ENCODE measurements at regions of chr4 and their contacts with region 1.

Region 1: GRCh38 chr4:122602277-122603142 is 18.4 kb downstream of the IL21 start:
- DNase-seq: no peak
- H3K4me3 Mint-ChIP-seq: no peak overlapping the region
- H3K27ac Mint-ChIP-seq: no peak overlapping the region
- H3K4me1 Mint-ChIP-seq: peaks cover 13% of the 10 kb centered on the region
- H3K27me3 Mint-ChIP-seq: peaks cover 7% of the 10 kb centered on the region

Region 2: GRCh38 chr4:122542411-122543236 is 59.9 kb before region 1 on chr4:
- CTCF ChIA-PET with region 1: no interaction called
- POLR2A ChIA-PET with region 1: no interaction called
- DNase-seq: no peak
- H3K4me3 Mint-ChIP-seq: no peak overlapping the region
- H3K27ac Mint-ChIP-seq: peak overlapping the region; percentile 72
- H3K4me1 Mint-ChIP-seq: peaks cover 46% of the 10 kb centered on the region
- H3K27me3 Mint-ChIP-seq: no peaks in the 10 kb centered on the region

Region 3: DNA sequence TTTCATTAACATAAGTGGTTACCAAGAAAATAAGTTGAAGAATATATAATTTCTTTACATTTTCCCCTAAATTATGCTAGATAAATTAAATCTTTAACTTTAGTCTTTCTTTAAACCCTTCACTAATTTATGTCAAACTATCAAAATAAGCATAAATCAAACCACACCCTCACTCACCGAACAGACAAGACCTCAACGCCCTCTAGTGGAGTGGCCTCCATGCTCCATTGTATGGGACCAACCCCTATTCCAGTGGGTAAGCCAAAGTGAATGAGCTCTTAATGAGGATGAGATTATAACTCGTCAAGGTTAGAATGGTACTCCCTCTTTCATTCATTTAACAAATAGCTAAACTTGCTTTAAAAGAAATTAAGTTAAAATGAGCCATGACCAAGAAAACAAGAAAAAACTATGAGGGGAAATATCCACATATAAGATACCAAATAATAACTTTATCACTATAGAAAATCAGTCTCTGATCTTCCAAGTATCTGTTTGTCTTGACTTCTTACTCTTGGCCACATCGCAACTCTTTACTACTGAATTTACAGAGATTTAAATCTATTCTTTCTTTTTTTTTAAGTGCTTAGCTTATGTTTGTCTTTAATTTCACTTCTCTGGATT is 114.4 kb after region 1 on chr4:
- CTCF ChIA-PET with region 1: interaction called, 47 read pairs
- POLR2A ChIA-PET with region 1: no interaction called
- DNase-seq: peak; percentile 77
- H3K4me3 Mint-ChIP-seq: no peak overlapping the region
- H3K27ac Mint-ChIP-seq: no peak overlapping the region
- H3K4me1 Mint-ChIP-seq: peaks cover 29% of the 10 kb centered on the region
- H3K27me3 Mint-ChIP-seq: no peaks in the 10 kb centered on the region

Region 4: GRCh38 chr4:122827879-122828601 is 225.5 kb after region 1 on chr4:
- CTCF ChIA-PET with region 1: no interaction called
- POLR2A ChIA-PET with region 1: no interaction called
- DNase-seq: peak; percentile 43
- H3K4me3 Mint-ChIP-seq: peak overlapping the region; percentile 69
- H3K27ac Mint-ChIP-seq: no peak overlapping the region
- H3K4me1 Mint-ChIP-seq: peaks cover 11% of the 10 kb centered on the region
- H3K27me3 Mint-ChIP-seq: peaks cover 73% of the 10 kb centered on the region

Region 5: DNA sequence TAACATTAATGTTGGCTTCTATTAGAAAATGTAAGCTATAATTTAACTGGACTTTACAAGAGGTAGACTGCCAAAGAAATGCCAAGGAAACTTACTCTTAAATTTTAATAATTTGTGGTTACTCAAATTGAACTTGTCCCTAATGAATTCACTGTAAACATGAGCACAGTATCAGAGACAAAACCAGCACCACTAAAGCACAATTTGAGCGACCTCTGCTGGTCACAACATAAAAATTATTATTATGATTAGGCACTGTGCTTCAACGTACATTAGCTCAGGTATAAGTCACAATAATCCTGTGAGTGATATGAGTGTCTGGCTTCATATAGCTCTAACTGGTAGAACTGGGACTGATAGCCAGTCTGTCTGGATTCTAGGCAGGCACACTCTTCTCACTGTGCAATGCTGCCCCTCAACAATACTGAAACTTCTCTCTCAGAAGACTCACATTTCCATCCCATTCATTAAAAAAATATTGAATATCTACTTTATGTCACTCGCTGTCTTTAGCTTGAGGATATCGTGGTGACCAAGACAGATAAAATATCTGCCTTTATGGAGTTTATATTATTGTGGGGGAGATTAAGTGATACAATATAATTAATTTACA is 311.9 kb after region 1 on chr4:
- CTCF ChIA-PET with region 1: interaction called, 10 read pairs
- POLR2A ChIA-PET with region 1: no interaction called
- DNase-seq: no peak
- H3K4me3 Mint-ChIP-seq: no peak overlapping the region
- H3K27ac Mint-ChIP-seq: no peak overlapping the region
- H3K4me1 Mint-ChIP-seq: peaks cover 3% of the 10 kb centered on the region
- H3K27me3 Mint-ChIP-seq: no peaks in the 10 kb centered on the region